Breast epithelium (tissue), 4 donors: ENCODE measurements at regions of chr15 and their contacts with region 1.

Region 1: GRCh38 chr15:52394118-52394517 is 98.5 kb upstream of the MYO5C start:
- DNase-seq: no peak
- H3K4me3 ChIP-seq: no peak overlapping the region
- H3K27ac ChIP-seq: no peak overlapping the region
- H3K4me1 ChIP-seq: no peaks in the 10 kb centered on the region
- H3K27me3 ChIP-seq: no peaks in the 10 kb centered on the region
- CTCF ChIP-seq: no peak
- POLR2A ChIP-seq: no peak

Region 2: DNA sequence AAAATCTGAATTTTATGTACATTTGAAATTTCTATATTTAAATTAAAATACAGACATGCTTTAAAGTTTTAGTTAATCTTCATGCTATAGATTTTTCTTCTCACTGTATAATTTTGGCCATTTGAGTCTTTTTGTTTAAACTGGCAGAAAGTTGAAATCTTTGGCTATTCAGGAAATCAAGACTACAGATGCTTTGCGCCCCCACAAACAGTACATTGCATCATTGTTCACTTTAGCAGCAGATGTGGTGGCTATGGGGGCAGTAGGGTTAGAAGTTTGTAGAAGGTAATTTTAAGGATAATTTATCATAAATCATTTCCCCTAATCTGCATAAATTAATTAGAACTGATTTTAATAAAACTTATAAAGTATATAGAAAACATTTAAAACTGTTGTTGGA is 1649.5 kb before region 1 on chr15:
- intact Hi-C with region 1: no loop called
- DNase-seq: no peak
- H3K4me3 ChIP-seq: no peak overlapping the region
- H3K27ac ChIP-seq: no peak overlapping the region
- H3K4me1 ChIP-seq: no peaks in the 10 kb centered on the region
- H3K27me3 ChIP-seq: no peaks in the 10 kb centered on the region
- CTCF ChIP-seq: no peak
- POLR2A ChIP-seq: no peak

Region 3: GRCh38 chr15:52463638-52464037 is 69.5 kb after region 1 on chr15:
- intact Hi-C with region 1: loop called (anchors 2 kb)
- DNase-seq: no peak
- H3K4me3 ChIP-seq: no peak overlapping the region
- H3K27ac ChIP-seq: no peak overlapping the region
- H3K4me1 ChIP-seq: no peaks in the 10 kb centered on the region
- H3K27me3 ChIP-seq: no peaks in the 10 kb centered on the region
- CTCF ChIP-seq: no peak
- POLR2A ChIP-seq: no peak